Breast epithelium (tissue), 4 donors: ENCODE measurements at regions of chr7 and their contacts with region 1.

Region 1: GRCh38 chr7:46809881-46810280 is 772.0 kb downstream of the TNS3 start:
- DNase-seq: no peak
- H3K4me3 ChIP-seq: no peak overlapping the region
- H3K27ac ChIP-seq: no peak overlapping the region
- H3K4me1 ChIP-seq: no peaks in the 10 kb centered on the region
- H3K27me3 ChIP-seq: no peaks in the 10 kb centered on the region
- CTCF ChIP-seq: no peak
- POLR2A ChIP-seq: no peak

Region 2: GRCh38 chr7:46847126-46847525 is 37.2 kb after region 1 on chr7:
- intact Hi-C with region 1: loop called (anchors 2 kb)
- DNase-seq: no peak
- H3K4me3 ChIP-seq: no peak overlapping the region
- H3K27ac ChIP-seq: no peak overlapping the region
- H3K4me1 ChIP-seq: no peaks in the 10 kb centered on the region
- H3K27me3 ChIP-seq: no peaks in the 10 kb centered on the region
- CTCF ChIP-seq: no peak
- POLR2A ChIP-seq: no peak

Region 3: GRCh38 chr7:47383072-47383471 is 573.2 kb after region 1 on chr7:
- intact Hi-C with region 1: no loop called
- DNase-seq: no peak
- H3K4me3 ChIP-seq: no peak overlapping the region
- H3K27ac ChIP-seq: no peak overlapping the region
- H3K4me1 ChIP-seq: peaks cover 0 to 15% of the 10 kb centered on the region in 2 donors
- H3K27me3 ChIP-seq: no peaks in the 10 kb centered on the region
- CTCF ChIP-seq: no peak
- POLR2A ChIP-seq: no peak